ENCODE measurements at regions of chr1 and their contacts with region 1.

Region 1: GRCh38 chr1:109112652-109113285 is 1.1 kb upstream of the ELAPOR1 start:
- DNase-seq: peak; percentile 92
- ATAC-seq: peak; percentile 45
- H3K4me3 Mint-ChIP-seq: peak overlapping the region; percentile 77
- H3K27ac Mint-ChIP-seq: peak overlapping the region; percentile 62
- H3K4me1 Mint-ChIP-seq: peaks cover 46% of the 10 kb centered on the region
- H3K27me3 Mint-ChIP-seq: peaks cover 2% of the 10 kb centered on the region
- CTCF ChIP-seq: peak; percentile 96

Region 2: GRCh38 chr1:108828022-108828961 is 284.5 kb before region 1 on chr1:
- CTCF ChIA-PET with region 1: interaction called, 24 read pairs
- POLR2A ChIA-PET with region 1: no interaction called
- intact Hi-C with region 1: loop called (anchors 10 kb)
- DNase-seq: peak; percentile 86
- ATAC-seq: peak; percentile 74
- H3K4me3 Mint-ChIP-seq: no peak overlapping the region
- H3K27ac Mint-ChIP-seq: no peak overlapping the region
- H3K4me1 Mint-ChIP-seq: no peaks in the 10 kb centered on the region
- H3K27me3 Mint-ChIP-seq: no peaks in the 10 kb centered on the region
- CTCF ChIP-seq: peak; percentile 74

Region 3: GRCh38 chr1:109027841-109028240 is 84.9 kb before region 1 on chr1:
- CTCF ChIA-PET with region 1: interaction called, 10 read pairs
- POLR2A ChIA-PET with region 1: no interaction called
- intact Hi-C with region 1: no loop called
- DNase-seq: no peak
- ATAC-seq: no peak
- H3K4me3 Mint-ChIP-seq: no peak overlapping the region
- H3K27ac Mint-ChIP-seq: no peak overlapping the region
- H3K4me1 Mint-ChIP-seq: peaks cover 2% of the 10 kb centered on the region
- H3K27me3 Mint-ChIP-seq: no peaks in the 10 kb centered on the region
- CTCF ChIP-seq: no peak

Region 4: GRCh38 chr1:109090196-109091077 is 22.3 kb before region 1 on chr1 and contains the start of gene TMEM167B:
- CTCF ChIA-PET with region 1: interaction called, 95 read pairs
- POLR2A ChIA-PET with region 1: no interaction called
- intact Hi-C with region 1: no loop called
- DNase-seq: peak; percentile 95
- ATAC-seq: peak; percentile 91
- H3K4me3 Mint-ChIP-seq: peak within 1 kb of the TSS; percentile 96
- H3K27ac Mint-ChIP-seq: peak within 1 kb of the TSS; percentile 97
- H3K4me1 Mint-ChIP-seq: peaks cover 24% of the 10 kb centered on the region
- H3K27me3 Mint-ChIP-seq: no peaks in the 10 kb centered on the region
- CTCF ChIP-seq: no peak
- total RNA-seq, gene TMEM167B: 21.8 to 23.4 TPM

Region 5: GRCh38 chr1:109131059-109131458 is 18.3 kb after region 1 on chr1:
- CTCF ChIA-PET with region 1: interaction called, 12 read pairs
- POLR2A ChIA-PET with region 1: interaction called, 4 read pairs
- intact Hi-C with region 1: no loop called
- DNase-seq: no peak
- ATAC-seq: peak; percentile 55
- H3K4me3 Mint-ChIP-seq: no peak overlapping the region
- H3K27ac Mint-ChIP-seq: no peak overlapping the region
- H3K4me1 Mint-ChIP-seq: peaks cover 20% of the 10 kb centered on the region
- H3K27me3 Mint-ChIP-seq: no peaks in the 10 kb centered on the region
- CTCF ChIP-seq: no peak

Region 6: GRCh38 chr1:109253484-109254141 is 140.8 kb after region 1 on chr1:
- CTCF ChIA-PET with region 1: no interaction called
- POLR2A ChIA-PET with region 1: no interaction called
- intact Hi-C with region 1: no loop called
- DNase-seq: no peak
- ATAC-seq: no peak
- H3K4me3 Mint-ChIP-seq: no peak overlapping the region
- H3K27ac Mint-ChIP-seq: no peak overlapping the region
- H3K4me1 Mint-ChIP-seq: peaks cover 11% of the 10 kb centered on the region
- H3K27me3 Mint-ChIP-seq: no peaks in the 10 kb centered on the region
- CTCF ChIP-seq: no peak

Measured in activated CD8-positive, alpha-beta T cell treated with anti-CD3 and anti-CD28 coated beads for 36 hours (primary cell).